ENCODE measurements at regions of chr2 and their contacts with region 1.

Region 1: DNA sequence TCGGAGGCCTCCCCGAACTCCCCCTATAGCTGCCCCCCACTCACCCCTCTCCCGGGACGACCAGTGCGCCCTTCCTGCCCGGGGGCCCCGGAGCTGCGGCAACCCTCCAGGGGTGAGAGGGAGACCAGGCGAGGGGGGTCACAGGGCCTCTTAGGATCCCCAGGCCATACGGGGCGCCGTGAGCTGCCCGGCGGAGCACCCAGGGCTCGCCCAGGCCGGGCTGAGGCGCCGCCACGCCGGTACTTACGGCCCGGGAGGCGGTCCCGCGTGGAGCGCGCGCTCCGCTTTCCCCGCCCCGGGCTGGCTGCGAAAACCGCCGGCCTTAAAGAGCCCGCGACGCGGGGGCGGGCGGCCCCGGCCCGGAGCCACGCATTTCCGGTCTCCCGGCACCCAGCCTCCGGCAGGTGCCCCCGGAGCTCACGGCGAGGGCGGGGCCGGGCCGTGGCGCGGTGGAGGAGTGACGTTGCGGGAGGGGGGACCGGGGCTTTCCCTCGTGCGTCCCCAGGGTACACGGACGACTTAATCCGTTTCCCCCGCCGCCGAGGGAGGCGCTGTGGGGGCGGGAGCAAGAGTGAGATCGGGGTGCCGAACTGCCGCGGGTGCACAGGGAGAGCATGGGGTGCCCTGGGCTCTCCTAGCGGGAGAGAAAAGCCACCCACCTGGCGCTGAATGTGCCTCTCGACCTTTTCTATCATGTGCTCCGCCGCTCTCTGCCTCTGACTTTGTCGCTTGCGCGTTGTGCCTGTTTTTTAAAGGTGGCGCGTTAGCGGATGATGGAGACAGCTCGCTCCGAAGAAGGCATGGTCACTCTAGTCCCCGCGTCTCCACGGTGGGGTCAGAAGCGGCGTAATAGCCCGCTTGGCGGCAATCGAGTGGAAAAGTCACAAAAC is at the start of gene METTL21A:
- DNase-seq: peak; percentile 92
- ATAC-seq: peak; percentile 89
- total RNA-seq, gene METTL21A: 13.7 TPM

Region 2: GRCh38 chr2:207529330-207530159 is 95.7 kb before region 1 on chr2 and contains the start of gene CREB1:
- intact Hi-C with region 1: loop called (anchors 5 kb)
- DNase-seq: peak; percentile 100
- ATAC-seq: peak; percentile 98
- total RNA-seq, gene CREB1: 83.9 TPM

Region 3: DNA sequence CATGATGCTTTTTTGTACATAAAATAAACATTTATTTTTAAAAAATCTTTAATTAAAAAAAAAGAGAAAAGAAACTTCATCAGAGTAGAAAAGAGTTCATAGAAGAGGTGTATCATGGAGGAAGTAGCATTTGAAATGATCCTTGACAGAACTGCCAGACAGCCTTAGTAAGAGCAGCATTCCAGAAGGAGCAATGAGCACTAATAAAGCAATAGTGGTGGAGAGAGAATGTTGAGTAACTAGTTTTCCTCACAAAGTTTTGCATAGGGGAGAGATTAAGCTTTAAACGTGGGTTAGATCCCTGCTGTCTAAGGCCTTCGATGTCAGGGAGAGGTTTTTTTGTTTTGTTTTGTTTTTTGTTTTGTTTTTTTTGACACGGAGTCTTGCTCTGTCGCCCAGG is 29.7 kb after region 1 on chr2:
- intact Hi-C with region 1: no loop called
- DNase-seq: no peak
- ATAC-seq: no peak

Region 4: GRCh38 chr2:207710814-207711740 is 85.8 kb after region 1 on chr2 and contains the start of gene CCNYL1:
- intact Hi-C with region 1: loop called (anchors 10 kb)
- DNase-seq: peak; percentile 99
- ATAC-seq: peak; percentile 100
- total RNA-seq, gene CCNYL1: 19.3 TPM

Region 5: DNA sequence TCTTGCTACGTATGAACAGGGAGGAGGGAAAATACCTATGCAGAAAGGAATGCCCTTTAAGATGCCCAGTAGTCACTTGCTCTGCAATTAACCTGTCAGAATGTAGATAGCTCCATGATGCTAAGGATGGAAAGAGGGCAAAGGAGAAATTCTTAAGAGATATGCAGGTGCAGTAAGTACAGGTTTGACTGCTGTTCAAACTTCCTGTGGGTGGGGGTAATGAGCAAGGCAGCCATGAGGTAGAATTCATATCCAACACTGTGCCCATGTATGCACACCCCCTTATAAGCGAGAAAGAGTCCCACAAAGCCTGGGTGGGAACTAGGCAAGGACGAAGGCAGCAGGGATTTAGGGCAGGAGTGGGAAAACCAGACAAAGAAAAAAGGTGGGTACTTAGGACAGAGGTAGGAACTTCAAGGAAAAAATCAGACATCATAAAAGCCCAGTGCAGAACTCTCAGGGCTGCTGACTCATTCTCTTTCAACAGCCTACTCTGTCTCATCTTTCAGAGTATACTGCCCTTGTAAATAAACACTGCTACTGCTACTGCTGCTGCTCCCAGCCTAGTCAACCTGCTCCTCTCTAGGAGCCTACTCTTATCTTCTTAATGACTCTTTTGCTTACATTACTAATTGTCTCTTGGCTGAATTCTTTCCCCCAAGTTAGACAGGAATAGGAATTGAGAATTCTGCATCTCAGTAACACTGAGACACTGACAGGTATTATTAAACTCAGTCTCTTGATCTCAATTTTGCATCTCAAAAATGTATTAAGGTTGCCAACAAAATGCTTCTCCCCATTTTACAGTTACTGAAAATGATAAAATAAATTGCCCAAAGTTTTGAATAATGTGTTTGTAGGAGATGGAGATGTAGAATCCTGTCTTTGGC is 970.4 kb after region 1 on chr2:
- intact Hi-C with region 1: no loop called
- DNase-seq: no peak
- ATAC-seq: no peak

Measured in sciatic nerve (tissue), 2 donors.